Activated B cell treated with CpG ODN at 0.5 μM for 24 hours (primary cell): ENCODE measurements at regions of chr17 and their contacts with region 1.

Region 1: DNA sequence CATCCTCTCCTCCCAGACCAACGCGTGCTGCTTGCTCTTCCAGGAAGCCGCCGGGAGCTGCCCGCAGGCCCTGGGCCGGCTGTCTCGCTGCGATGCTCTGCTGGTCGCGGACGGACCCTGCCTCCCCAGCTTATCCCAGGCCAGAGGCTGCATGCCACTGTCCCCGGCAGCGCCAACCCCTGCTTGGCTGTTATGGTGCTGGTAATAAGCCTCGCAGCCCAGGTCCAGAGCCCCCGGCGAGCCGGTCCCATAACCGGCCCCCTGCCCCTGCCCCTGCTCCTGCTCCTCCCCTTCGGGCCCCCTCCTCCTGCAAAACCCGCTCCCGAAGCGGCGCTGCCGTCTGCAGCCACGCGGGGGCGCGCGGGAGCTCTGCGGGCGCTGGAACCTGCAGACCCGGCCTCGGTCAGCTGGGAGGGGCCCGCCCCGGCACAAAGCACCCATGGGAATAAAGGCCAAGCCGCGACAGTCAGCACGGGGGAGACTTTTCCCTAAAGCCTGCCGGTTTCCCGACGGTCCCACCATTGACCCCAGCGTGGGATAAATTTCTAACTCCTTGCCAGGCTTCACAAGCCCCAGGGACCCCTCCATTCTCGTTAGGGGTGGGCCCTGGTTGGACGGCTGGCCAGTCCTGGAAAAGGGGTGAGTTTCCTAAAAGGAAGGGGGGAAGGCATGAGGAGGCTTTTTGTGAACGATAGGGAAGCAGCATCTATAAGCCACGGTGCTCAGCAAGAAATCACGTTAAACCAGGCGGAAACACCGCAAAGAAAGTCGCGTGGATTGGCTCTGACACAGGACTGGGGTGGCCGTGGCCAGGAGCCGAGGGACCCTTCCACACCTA is 11.2 kb downstream of the ENPP7 start:
- DNase-seq: peak; percentile 81
- ATAC-seq: peak; percentile 83
- H3K4me3 Mint-ChIP-seq: no peak overlapping the region
- H3K27ac Mint-ChIP-seq: no peak overlapping the region
- H3K4me1 Mint-ChIP-seq: peaks cover 15% of the 10 kb centered on the region
- H3K27me3 Mint-ChIP-seq: peaks cover 32% of the 10 kb centered on the region
- CTCF ChIP-seq: peak; percentile 58

Region 2: GRCh38 chr17:79695797-79696609 is 46.0 kb before region 1 on chr17:
- CTCF ChIA-PET with region 1: no interaction called
- POLR2A ChIA-PET with region 1: no interaction called
- intact Hi-C with region 1: no loop called
- DNase-seq: no peak
- ATAC-seq: no peak
- H3K4me3 Mint-ChIP-seq: no peak overlapping the region
- H3K27ac Mint-ChIP-seq: no peak overlapping the region
- H3K4me1 Mint-ChIP-seq: peaks cover 9% of the 10 kb centered on the region
- H3K27me3 Mint-ChIP-seq: peaks cover 46% of the 10 kb centered on the region
- CTCF ChIP-seq: no peak

Region 3: GRCh38 chr17:79915850-79916430 is 174.0 kb after region 1 on chr17:
- CTCF ChIA-PET with region 1: no interaction called
- POLR2A ChIA-PET with region 1: no interaction called
- intact Hi-C with region 1: loop called (anchors 1 kb)
- DNase-seq: no peak
- ATAC-seq: no peak
- H3K4me3 Mint-ChIP-seq: no peak overlapping the region
- H3K27ac Mint-ChIP-seq: no peak overlapping the region
- H3K4me1 Mint-ChIP-seq: peaks cover 13% of the 10 kb centered on the region
- H3K27me3 Mint-ChIP-seq: no peaks in the 10 kb centered on the region
- CTCF ChIP-seq: no peak

Region 4: DNA sequence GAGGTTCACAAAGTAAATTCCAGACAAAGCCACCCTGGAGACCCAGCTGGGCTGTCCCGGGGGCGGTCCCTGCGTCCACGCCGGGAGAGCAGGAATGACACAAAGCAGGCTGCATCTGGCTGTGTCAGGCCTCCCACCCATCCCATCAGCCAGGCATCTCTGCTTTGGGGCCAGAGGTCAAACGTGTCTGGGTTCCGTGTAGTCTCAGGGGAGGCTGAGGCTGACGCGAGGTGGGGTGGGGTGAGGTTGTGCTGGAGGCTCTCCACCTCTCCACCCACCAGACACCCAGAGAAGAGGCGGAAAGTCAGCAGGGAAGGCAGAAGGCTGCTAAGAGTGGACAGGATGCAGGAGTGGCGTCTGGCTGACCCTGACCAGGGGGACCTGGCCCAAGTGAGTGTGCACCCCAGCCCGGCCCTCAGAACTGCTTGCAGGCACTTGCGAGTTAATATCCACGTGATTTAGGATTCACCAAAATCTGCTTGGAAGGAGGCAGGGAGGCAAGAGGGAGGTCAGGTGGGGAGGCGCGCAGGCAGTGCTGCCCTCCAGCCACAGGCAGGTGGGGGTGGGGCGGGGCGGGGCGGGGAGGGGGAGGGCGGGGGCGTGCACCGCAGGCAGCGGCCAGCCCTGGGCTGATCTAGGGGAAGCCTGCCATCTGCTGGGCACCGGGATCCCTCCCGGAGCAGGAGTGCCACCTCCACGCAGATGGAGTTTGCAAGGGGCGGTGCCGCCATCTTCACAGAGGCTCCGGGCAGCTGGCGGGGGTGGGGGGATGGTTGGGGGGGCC is 249.4 kb after region 1 on chr17:
- CTCF ChIA-PET with region 1: interaction called, 13 read pairs
- POLR2A ChIA-PET with region 1: interaction called, 3 read pairs
- intact Hi-C with region 1: loop called (anchors 1 kb)
- DNase-seq: peak; percentile 67
- ATAC-seq: peak; percentile 91
- H3K4me3 Mint-ChIP-seq: peak overlapping the region; percentile 69
- H3K27ac Mint-ChIP-seq: no peak overlapping the region
- H3K4me1 Mint-ChIP-seq: peaks cover 35% of the 10 kb centered on the region
- H3K27me3 Mint-ChIP-seq: peaks cover 2% of the 10 kb centered on the region
- CTCF ChIP-seq: no peak